ENCODE measurements at regions of chr1 and their contacts with region 1.

Region 1: DNA sequence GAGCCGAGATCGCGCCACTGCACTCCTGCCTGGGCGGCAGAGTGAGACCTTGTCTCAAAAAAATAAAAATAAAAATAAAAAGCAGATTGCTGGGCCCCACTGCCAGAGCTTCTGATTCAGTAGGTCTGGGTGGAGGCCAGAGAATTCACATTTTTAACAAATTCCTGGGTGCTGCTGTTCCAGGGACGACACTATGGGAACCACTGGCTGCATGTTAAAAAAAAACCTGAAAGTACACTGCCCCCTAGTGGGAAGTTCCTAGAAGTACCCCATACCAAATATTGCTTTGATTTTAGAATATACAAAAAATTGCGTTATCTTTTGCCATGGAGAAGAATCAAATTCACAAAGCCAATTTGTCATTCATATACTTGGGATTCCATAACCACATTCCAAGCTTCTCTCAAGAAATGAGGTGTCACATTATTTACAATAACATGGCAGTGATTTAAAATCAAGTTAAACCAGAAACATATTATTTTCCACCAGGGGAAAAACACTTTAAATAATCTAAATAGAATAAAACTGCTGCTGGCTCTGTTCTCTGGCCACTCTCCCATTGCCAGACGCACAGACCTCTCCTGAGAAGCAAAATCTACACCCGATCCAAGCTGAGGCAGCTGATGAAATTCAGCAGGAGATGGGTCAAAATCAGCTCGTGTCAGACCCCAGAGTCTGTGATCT is 27.4 kb downstream of the SYF2 start:
- DNase-seq: peak; percentile 51
- H3K4me3 Mint-ChIP-seq: no peak overlapping the region
- H3K27ac Mint-ChIP-seq: no peak overlapping the region
- H3K4me1 Mint-ChIP-seq: no peaks in the 10 kb centered on the region
- H3K27me3 Mint-ChIP-seq: no peaks in the 10 kb centered on the region
- CTCF ChIP-seq: peak; percentile 66

Region 2: GRCh38 chr1:24847995-24848881 is 356.7 kb before region 1 on chr1:
- CTCF ChIA-PET with region 1: interaction called, 12 read pairs
- POLR2A ChIA-PET with region 1: interaction called, 3 read pairs
- intact Hi-C with region 1: loop called (anchors 1 kb)
- DNase-seq: peak; percentile 63
- H3K4me3 Mint-ChIP-seq: peak overlapping the region; percentile 53
- H3K27ac Mint-ChIP-seq: no peak overlapping the region
- H3K4me1 Mint-ChIP-seq: no peaks in the 10 kb centered on the region
- H3K27me3 Mint-ChIP-seq: no peaks in the 10 kb centered on the region
- CTCF ChIP-seq: peak; percentile 89

Region 3: GRCh38 chr1:25120281-25120680 is 84.7 kb before region 1 on chr1:
- CTCF ChIA-PET with region 1: no interaction called
- POLR2A ChIA-PET with region 1: no interaction called
- intact Hi-C with region 1: no loop called
- DNase-seq: no peak
- H3K4me3 Mint-ChIP-seq: no peak overlapping the region
- H3K27ac Mint-ChIP-seq: no peak overlapping the region
- H3K4me1 Mint-ChIP-seq: no peaks in the 10 kb centered on the region
- H3K27me3 Mint-ChIP-seq: peaks cover 10% of the 10 kb centered on the region
- CTCF ChIP-seq: no peak

Region 4: GRCh38 chr1:25190260-25190659 is 14.7 kb before region 1 on chr1:
- CTCF ChIA-PET with region 1: interaction called, 15 read pairs
- POLR2A ChIA-PET with region 1: no interaction called
- intact Hi-C with region 1: no loop called
- DNase-seq: no peak
- H3K4me3 Mint-ChIP-seq: no peak overlapping the region
- H3K27ac Mint-ChIP-seq: no peak overlapping the region
- H3K4me1 Mint-ChIP-seq: no peaks in the 10 kb centered on the region
- H3K27me3 Mint-ChIP-seq: peaks cover 37% of the 10 kb centered on the region
- CTCF ChIP-seq: no peak

Region 5: GRCh38 chr1:25217598-25218232 is 12.8 kb after region 1 on chr1:
- CTCF ChIA-PET with region 1: interaction called, 12 read pairs
- POLR2A ChIA-PET with region 1: interaction called, 3 read pairs
- intact Hi-C with region 1: no loop called
- DNase-seq: no peak
- H3K4me3 Mint-ChIP-seq: no peak overlapping the region
- H3K27ac Mint-ChIP-seq: no peak overlapping the region
- H3K4me1 Mint-ChIP-seq: no peaks in the 10 kb centered on the region
- H3K27me3 Mint-ChIP-seq: no peaks in the 10 kb centered on the region
- CTCF ChIP-seq: no peak

Region 6: GRCh38 chr1:25232027-25232865 is 27.3 kb after region 1 on chr1 and contains the start of gene SYF2:
- CTCF ChIA-PET with region 1: interaction called, 16 read pairs
- POLR2A ChIA-PET with region 1: no interaction called
- intact Hi-C with region 1: no loop called
- DNase-seq: peak; percentile 91
- H3K4me3 Mint-ChIP-seq: no peak within 1 kb of the TSS
- H3K27ac Mint-ChIP-seq: no peak within 1 kb of the TSS
- H3K4me1 Mint-ChIP-seq: peaks cover 7% of the 10 kb centered on the region
- H3K27me3 Mint-ChIP-seq: no peaks in the 10 kb centered on the region
- CTCF ChIP-seq: no peak
- total RNA-seq, gene SYF2: 40.5 and 43.0 TPM in 2 replicates

Measured in MCF 10A (cell line).